ENCODE measurements at regions of chr6 and their contacts with region 1.

Region 1: GRCh38 chr6:5302995-5303622 is 41.8 kb downstream of the FARS2 start:
- DNase-seq: peak; percentile 27 to 68 (median 44)
- ATAC-seq: peak; percentile 66 to 92 (median 90)
- H3K4me3 ChIP-seq: no peak overlapping the region
- H3K27ac ChIP-seq: no peak overlapping the region
- H3K4me1 ChIP-seq: peaks cover 0 to 17% (median 4%) of the 10 kb centered on the region in 12 donors
- H3K27me3 ChIP-seq: no peaks in the 10 kb centered on the region
- CTCF ChIP-seq: peak; percentile 22 to 63 (median 46)
- POLR2A ChIP-seq: no peak

Region 2: DNA sequence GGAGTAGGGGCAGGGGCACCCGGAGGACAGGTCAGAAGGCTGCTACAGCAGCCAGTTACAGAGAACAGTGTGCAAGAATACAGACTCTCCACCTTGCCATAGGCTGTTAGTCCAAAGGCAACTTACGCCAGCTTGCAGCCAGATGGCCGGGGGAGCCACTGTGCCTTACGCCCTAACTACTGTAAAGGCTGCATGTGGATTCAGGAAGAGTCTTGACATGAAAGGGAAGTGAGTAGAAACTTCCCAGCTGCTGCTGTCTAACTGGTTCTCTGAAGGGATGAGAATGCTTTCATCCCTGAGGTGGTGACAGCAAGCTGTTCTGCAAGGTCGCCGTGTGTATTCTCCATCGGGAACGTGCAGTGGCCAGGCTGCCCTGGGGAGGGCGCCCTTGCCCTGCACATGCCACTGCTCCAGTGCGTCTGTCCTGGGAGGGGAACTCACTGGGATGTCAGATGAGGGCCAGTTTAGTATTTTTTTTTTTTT is 88.5 kb before region 1 on chr6:
- intact Hi-C with region 1: loop called in 6 of 10 experiments (anchors 5 to 10 kb)
- DNase-seq: peak in 4 of 5 donors; percentile 39 to 72 (median 55)
- ATAC-seq: peak; percentile 86 to 94 (median 90)
- H3K4me3 ChIP-seq: peak overlapping the region in 1 of 12 donors; percentile 16
- H3K27ac ChIP-seq: peak overlapping the region in 5 of 12 donors; percentile 11 to 36 (median 17)
- H3K4me1 ChIP-seq: peaks cover 0 to 34% (median 15%) of the 10 kb centered on the region in 12 donors
- H3K27me3 ChIP-seq: no peaks in the 10 kb centered on the region
- CTCF ChIP-seq: peak; percentile 51 to 77 (median 70)
- POLR2A ChIP-seq: no peak

Region 3: DNA sequence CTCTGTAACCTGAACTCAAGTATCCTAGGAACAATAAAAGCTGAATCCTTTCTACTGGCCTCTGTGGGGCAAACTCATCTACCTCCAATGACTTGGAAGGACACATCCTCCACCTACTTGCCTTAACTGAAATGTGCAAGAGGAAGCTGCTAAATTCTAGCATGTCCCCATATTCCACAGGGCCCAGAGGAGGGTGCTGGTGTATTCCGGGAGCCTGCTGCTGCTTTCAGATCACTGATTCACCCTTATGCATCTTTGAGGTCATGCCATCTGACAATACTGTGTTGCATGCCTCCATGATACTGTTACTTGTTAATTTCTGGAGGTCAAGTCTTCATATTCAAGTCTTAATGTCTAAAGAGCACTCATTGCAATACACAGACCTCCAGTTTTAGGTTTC is 82.7 kb before region 1 on chr6:
- intact Hi-C with region 1: loop called in 5 of 10 experiments (anchors 5 to 10 kb)
- DNase-seq: no peak
- ATAC-seq: no peak
- H3K4me3 ChIP-seq: no peak overlapping the region
- H3K27ac ChIP-seq: no peak overlapping the region
- H3K4me1 ChIP-seq: peaks cover 0 to 11% (median 0%) of the 10 kb centered on the region in 12 donors
- H3K27me3 ChIP-seq: no peaks in the 10 kb centered on the region
- CTCF ChIP-seq: no peak
- POLR2A ChIP-seq: no peak

Region 4: DNA sequence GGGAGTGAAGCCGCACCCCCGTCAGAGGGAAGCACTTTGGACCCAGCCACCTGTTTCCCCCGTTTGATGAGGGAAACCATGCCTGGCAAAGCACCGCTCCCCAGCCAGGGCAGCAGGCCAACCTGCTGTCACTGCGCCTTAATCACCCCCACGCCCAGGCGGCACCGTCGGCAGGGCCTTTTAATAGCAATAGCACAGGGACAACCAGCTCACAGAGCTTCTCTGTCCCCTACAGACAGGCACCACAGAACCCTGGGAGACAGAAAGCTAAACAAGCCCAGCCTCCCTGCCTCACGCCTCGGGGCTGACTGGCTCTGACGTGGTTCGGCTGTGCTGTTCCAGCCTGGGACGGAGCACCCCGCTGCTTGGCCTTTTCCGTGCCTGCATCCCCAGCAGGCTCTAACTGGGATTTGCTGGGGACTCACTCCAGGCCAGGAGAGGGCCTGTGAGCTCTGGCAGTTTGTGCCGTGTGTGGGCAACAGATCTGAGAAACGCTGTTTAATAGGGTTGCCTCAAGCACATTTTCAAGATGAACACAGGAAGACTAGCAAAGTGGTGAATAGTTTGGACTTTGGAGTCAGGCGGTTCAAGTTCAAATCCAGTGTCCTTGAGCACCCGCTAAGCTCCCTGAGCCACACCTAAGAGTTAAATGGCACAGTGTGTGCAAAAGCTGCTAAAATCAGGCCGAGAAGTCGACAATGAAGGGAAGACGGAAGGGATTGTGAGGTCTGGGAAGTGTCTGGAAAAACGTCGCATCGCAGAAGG is 479.9 kb after region 1 on chr6:
- intact Hi-C with region 1: no loop called
- DNase-seq: peak; percentile 70 to 88 (median 77)
- ATAC-seq: peak; percentile 94 to 98 (median 98)
- H3K4me3 ChIP-seq: peak overlapping the region in 1 of 12 donors; percentile 14
- H3K27ac ChIP-seq: peak overlapping the region in 11 of 12 donors; percentile 35 to 83 (median 71)
- H3K4me1 ChIP-seq: peaks cover 0 to 6% (median 0%) of the 10 kb centered on the region in 12 donors
- H3K27me3 ChIP-seq: no peaks in the 10 kb centered on the region
- CTCF ChIP-seq: no peak
- POLR2A ChIP-seq: no peak